ENCODE measurements at regions of chr4 and their contacts with region 1.

Region 1: GRCh38 chr4:931960-932712 is at the starts of genes GAK and TMEM175:
- DNase-seq: peak; percentile 99

Region 2: DNA sequence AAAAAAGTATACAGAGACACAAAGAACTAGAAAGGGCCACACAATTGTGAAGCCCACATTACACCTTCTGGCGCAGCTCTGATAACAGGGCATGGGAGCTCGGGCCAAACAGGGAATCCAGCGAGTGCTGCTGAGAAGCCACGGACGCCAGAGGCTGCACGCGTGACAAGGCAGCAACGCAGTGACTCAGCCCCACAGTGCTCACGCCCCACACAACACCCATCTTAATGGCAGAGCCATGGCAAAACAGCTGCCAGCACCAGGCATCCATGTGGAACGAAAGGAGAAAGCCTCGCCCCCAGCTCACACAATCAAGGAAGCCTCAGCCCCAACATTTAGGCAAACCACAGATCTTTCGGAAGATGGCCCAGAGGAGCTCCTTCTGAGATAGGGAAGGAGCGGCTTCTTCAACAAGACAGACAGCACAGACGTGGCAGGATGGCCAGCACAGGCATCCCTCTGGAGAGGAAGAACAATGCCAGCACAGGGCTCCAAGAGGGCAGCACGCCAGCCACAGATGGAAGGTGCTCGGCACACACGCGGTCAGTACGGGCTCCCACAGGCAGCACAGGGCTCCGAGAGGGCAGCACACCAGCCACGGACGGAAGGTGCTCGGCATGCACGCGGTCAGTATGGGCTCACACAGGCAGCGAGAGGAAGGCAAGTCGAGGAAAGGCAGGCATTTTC is 33.1 kb before region 1 on chr4:
- CTCF ChIA-PET with region 1: no interaction called
- POLR2A ChIA-PET with region 1: interaction called, 10 read pairs
- DNase-seq: no peak

Region 3: DNA sequence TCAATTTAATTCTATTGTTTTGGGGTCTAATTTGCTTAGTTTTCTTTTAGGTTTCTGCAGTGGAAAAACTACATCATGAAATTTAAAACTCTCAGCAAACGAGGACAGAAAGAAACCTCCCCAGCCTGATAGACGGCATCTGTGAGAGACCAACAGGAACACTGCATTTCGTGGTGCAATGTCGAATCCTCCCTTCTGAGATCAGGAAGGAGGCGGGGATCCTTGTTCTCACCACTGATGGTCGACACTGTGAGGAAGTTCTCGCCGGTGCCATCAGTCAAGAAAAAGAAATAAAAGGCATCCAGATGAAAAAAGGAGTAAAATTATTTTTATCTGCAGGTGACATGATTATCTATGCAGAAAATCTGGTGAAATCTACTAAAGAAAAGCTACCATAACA is 16.5 kb before region 1 on chr4:
- CTCF ChIA-PET with region 1: no interaction called
- POLR2A ChIA-PET with region 1: no interaction called
- DNase-seq: no peak

Region 4: DNA sequence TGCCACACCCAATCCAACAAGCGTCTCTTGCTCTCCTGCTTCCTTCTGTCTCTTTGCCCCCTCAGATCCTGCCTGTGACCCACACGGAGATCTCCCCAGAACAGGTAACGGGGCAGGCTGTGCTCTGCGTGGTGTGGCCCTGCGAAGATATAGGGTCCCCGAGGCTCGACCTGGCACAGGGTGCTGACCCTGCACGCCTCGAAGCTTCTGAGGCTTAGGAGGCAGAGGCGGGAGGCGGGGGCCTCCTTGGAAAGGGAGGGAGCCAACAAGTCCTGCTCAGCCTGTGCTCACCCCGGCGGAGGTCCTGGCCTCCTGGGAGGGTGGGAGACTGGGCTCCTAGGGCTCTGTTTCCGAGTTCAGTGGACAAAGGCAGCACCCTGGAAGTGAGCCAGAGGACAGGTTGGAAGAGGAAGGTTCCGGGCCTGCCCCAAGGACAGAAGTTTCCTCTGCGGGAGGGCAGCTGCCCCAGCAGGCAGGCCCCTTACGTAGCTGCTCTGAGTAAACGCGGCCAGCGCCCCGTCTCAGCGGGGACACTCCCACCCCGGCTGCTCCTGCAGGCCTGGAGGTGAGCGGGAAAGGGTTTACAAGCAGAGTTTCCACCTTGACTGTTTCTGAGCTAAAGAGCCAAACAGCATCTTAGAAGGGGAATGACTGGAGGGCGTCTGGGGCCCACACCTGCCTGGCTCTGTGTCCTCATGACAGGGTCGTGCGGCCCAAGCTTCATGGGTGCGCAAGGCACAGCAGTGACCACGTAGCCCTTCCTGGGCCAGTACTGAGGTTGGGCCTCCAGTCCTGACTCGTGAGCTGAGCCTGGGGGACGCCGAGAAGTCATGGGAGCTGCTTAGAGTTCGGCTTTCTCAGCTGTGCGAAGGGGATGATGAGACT is 16.2 kb after region 1 on chr4:
- CTCF ChIA-PET with region 1: interaction called, 3 read pairs
- POLR2A ChIA-PET with region 1: interaction called, 12 read pairs
- DNase-seq: no peak

Region 5: GRCh38 chr4:986879-987623 is 54.9 kb after region 1 on chr4 and contains the start of gene IDUA:
- CTCF ChIA-PET with region 1: no interaction called
- POLR2A ChIA-PET with region 1: interaction called, 11 read pairs
- DNase-seq: peak; percentile 70